Heart left ventricle (tissue), 16 donors: ENCODE measurements at regions of chr10 and their contacts with region 1.

Region 1: DNA sequence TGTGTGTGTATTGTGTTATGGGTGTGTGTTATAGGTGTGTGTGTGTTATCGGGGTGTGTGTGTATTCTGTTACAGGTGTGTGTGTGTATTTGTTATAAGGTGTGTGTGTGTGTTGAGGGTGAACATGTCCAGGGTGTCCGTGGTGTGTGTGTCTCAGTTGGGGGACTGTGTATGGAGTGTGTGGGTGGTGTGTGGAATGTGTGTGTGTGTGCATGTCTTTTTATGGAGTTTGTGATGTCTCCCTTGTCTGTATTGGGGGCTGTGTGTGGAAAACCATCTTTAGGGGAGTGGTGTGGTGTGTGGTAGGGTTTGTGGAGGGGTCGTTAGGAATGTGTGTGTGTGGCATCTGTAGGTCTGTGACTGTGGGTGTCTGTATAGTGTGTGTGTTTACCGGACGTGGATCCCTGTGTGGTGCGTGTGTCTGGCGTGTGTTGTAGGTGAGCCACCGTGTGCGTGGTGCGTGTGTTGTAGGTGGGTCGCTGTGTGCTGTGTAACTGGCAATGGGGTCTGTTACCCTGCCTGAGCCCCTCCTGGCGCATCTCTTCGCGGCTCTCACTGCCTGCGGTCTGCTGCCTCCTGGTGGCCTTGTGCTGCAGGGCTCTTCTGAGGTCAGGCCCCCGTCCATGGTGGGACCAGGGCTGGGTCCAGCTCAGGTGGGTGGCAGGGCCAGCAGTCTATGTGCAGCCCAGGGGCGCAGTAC is 61.7 kb downstream of the PALD1 start:
- DNase-seq: peak in 2 of 5 donors; percentile 45 to 67
- ATAC-seq: peak in 3 of 4 donors; percentile 32 to 72 (median 53)
- H3K4me3 ChIP-seq: no peak overlapping the region
- H3K27ac ChIP-seq: no peak overlapping the region
- H3K4me1 ChIP-seq: no peaks in the 10 kb centered on the region
- H3K27me3 ChIP-seq: no peaks in the 10 kb centered on the region
- CTCF ChIP-seq: peak; percentile 58 to 80 (median 68)
- POLR2A ChIP-seq: no peak

Region 2: DNA sequence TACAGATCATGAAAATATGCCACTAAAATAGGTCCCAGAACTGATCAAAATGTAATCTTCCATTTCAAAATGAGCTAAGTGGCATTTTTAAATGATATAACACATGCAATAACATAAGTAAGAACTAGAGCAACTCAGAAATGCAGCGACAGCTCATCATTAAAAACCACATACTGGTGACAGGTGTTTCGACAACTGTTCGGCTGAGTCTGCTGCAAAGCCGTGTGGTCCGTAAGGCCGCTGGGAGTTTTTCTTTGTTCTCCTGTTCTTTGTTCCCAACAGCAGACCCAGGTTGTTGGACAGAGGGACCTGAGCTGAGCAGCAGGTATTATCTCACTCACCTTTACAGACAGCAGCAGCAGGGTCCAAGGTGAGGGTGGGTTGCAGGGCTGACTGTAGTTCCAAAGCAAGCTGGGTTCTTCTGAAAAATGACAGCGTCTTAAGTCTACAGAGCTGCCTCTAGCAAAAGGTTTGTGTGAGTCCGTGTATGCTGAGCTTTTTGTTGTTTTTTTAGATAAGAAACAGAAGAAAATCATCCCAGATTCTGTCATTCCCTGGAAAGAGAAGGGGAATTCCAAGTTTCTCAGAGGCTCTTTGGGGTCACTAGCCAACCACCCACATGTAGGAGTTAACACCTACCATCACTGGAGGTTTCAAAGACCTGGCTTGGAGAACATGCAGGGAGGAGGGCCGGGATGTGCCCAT is 533.0 kb before region 1 on chr10:
- intact Hi-C with region 1: no loop called
- DNase-seq: no peak
- ATAC-seq: no peak
- H3K4me3 ChIP-seq: no peak overlapping the region
- H3K27ac ChIP-seq: no peak overlapping the region
- H3K4me1 ChIP-seq: no peaks in the 10 kb centered on the region
- H3K27me3 ChIP-seq: peaks cover 0 to 16% (median 0%) of the 10 kb centered on the region in 9 donors
- CTCF ChIP-seq: no peak
- POLR2A ChIP-seq: no peak

Region 3: DNA sequence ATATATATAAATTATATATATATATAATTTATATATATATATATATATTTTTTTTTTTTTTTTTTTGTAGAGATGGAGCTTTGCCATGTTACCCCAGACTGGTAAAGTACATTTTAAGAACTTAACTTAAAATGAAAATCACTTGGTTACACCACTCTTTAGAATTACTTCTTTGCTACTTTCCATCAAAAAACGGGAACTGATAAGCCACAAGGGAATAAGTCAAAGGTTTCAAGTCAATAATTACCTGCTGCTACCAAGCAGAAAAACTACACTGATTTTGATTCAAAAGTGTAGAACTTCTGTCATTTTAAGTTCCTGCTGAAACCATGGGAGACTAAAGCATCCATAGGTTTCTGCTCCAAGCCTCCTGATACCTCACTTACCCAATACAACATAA is 319.2 kb before region 1 on chr10:
- intact Hi-C with region 1: loop called in 3 of 10 experiments (anchors 5 to 10 kb)
- DNase-seq: no peak
- ATAC-seq: no peak
- H3K4me3 ChIP-seq: peak overlapping the region in 1 of 12 donors; percentile 35
- H3K27ac ChIP-seq: peak overlapping the region in 4 of 12 donors; percentile 20 to 40 (median 32)
- H3K4me1 ChIP-seq: peaks cover 0 to 20% (median 4%) of the 10 kb centered on the region in 12 donors
- H3K27me3 ChIP-seq: no peaks in the 10 kb centered on the region
- CTCF ChIP-seq: no peak
- POLR2A ChIP-seq: no peak

Region 4: DNA sequence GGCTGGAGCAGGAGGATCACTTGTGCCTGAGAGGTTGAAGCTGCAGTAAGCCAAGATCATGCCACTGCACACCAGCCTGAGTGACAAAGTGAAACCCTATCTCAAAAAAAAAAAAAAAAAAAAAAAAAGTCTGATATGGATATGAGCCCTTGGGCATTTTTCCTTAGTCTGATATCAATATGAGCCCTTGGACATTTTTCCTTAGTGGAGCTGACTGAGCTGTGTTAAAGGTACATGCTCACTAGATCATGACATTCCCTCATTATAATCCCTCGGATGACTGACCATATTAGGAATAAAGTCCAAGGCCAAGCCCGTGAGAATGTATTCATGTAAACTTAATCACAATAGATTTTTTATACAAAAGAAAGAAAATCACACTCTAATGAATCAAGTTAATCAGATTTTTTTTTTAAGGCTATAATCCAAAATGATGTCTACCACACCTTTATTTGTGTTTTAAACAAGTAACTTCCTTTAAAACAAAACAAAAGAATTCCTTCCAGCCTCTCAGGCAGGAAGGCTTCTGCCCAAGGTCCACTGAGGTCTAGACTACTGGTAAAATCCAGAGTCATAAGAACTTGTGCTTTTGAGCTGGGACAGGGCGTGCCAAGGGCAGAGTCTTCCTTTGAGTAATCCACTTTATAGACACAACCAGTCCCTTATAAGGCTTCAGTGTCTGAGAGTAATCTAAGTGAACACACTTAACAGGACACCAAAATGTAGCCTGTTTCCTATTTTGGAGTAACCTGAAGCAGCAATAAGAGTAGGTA is 312.5 kb before region 1 on chr10:
- intact Hi-C with region 1: loop called in 3 of 10 experiments (anchors 5 to 10 kb)
- DNase-seq: no peak
- ATAC-seq: peak in 3 of 4 donors; percentile 42 to 60 (median 48)
- H3K4me3 ChIP-seq: no peak overlapping the region
- H3K27ac ChIP-seq: peak overlapping the region in 6 of 12 donors; percentile 1 to 34 (median 28)
- H3K4me1 ChIP-seq: peaks cover 0 to 55% (median 23%) of the 10 kb centered on the region in 12 donors
- H3K27me3 ChIP-seq: no peaks in the 10 kb centered on the region
- CTCF ChIP-seq: no peak
- POLR2A ChIP-seq: no peak

Region 5: GRCh38 chr10:70742537-70743429 is 202.5 kb after region 1 on chr10:
- intact Hi-C with region 1: no loop called
- DNase-seq: peak; percentile 54 to 75 (median 62)
- ATAC-seq: peak in 3 of 4 donors; percentile 38 to 88 (median 72)
- H3K4me3 ChIP-seq: no peak overlapping the region
- H3K27ac ChIP-seq: peak overlapping the region in 8 of 12 donors; percentile 31 to 86 (median 49)
- H3K4me1 ChIP-seq: peaks cover 0 to 41% (median 20%) of the 10 kb centered on the region in 12 donors
- H3K27me3 ChIP-seq: no peaks in the 10 kb centered on the region
- CTCF ChIP-seq: no peak
- POLR2A ChIP-seq: no peak